PC-3 (cell line): ENCODE measurements at regions of chr15 and their contacts with region 1.

Region 1: DNA sequence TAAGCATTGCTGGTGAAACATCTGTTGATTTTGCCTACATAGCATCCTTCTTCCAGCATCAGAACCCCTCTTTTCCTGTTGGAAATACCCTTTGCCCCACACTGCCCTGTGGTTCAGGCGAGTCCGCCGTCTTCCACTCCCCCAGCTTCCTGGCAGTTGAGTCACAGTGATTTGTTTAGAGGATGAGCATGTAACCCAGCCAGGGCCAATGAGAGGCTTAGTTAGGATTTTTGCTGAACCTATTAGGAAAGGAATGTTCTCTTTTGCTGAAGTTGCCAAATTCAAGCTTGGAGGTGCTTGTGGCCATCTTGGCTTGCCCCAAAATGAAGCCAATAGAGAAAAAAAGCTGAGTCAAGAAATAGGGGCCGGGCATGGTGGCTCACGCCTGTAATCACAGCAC is 19.0 kb upstream of the MEX3B start:
- DNase-seq: no peak
- ATAC-seq: no peak
- H3K4me3 ChIP-seq: no peak overlapping the region
- H3K27ac ChIP-seq: no peak overlapping the region
- H3K4me1 ChIP-seq: no peaks in the 10 kb centered on the region
- H3K27me3 ChIP-seq: peaks cover 24% of the 10 kb centered on the region
- CTCF ChIP-seq: no peak

Region 2: GRCh38 chr15:81723701-81724100 is 341.1 kb before region 1 on chr15:
- CTCF ChIA-PET with region 1: no interaction called
- POLR2A ChIA-PET with region 1: interaction called, 12 read pairs
- intact Hi-C with region 1: no loop called
- DNase-seq: no peak
- ATAC-seq: no peak
- H3K4me3 ChIP-seq: no peak overlapping the region
- H3K27ac ChIP-seq: no peak overlapping the region
- H3K4me1 ChIP-seq: no peaks in the 10 kb centered on the region
- H3K27me3 ChIP-seq: no peaks in the 10 kb centered on the region
- CTCF ChIP-seq: no peak